ENCODE measurements at regions of chr2 and their contacts with region 1.

Region 1: GRCh38 chr2:207662203-207662602 is 37.0 kb upstream of the METTL21A start:
- DNase-seq: no peak
- H3K4me3 ChIP-seq: no peak overlapping the region
- H3K27me3 ChIP-seq: peaks cover 1% of the 10 kb centered on the region; the same call in 1 of the 2 replicates
- CTCF ChIP-seq: no peak

Region 2: GRCh38 chr2:207529330-207530159 is 132.7 kb before region 1 on chr2 and contains the start of gene CREB1:
- CTCF ChIA-PET with region 1: no interaction called
- POLR2A ChIA-PET with region 1: no interaction called
- DNase-seq: peak; percentile 91
- H3K4me3 ChIP-seq: peak within 1 kb of the TSS; percentile 91
- H3K27me3 ChIP-seq: no peaks in the 10 kb centered on the region
- CTCF ChIP-seq: no peak; the same call in 1 of the 2 replicates
- polyA plus RNA-seq, gene CREB1: 37.4 and 44.4 TPM in 2 replicates

Region 3: DNA sequence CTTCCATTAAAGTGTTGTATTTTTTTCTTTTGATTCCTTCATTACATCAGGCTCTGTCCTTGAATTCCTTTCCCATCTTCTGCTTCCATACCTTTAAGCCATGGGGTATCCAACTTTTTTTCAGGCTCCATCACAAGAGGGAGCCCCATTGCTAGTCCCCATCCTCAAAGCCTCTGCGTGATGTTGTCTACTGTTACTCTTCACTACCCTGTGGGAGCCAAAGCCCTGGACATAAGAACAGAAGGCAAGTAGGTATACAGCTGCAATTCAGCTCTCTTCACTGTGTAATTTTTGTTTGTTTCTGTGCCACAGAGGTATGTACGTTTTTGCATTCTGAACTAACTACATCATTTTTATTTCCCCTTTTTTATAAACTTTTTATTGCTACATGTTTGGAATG is 12.6 kb after region 1 on chr2:
- CTCF ChIA-PET with region 1: interaction called, 3 read pairs
- POLR2A ChIA-PET with region 1: interaction called, 13 read pairs
- DNase-seq: no peak
- H3K4me3 ChIP-seq: no peak overlapping the region
- H3K27me3 ChIP-seq: peaks cover 3% of the 10 kb centered on the region; the same call in 1 of the 2 replicates
- CTCF ChIP-seq: no peak